A549 (cell line): ENCODE measurements at regions of chr5 and their contacts with region 1.

Region 1: DNA sequence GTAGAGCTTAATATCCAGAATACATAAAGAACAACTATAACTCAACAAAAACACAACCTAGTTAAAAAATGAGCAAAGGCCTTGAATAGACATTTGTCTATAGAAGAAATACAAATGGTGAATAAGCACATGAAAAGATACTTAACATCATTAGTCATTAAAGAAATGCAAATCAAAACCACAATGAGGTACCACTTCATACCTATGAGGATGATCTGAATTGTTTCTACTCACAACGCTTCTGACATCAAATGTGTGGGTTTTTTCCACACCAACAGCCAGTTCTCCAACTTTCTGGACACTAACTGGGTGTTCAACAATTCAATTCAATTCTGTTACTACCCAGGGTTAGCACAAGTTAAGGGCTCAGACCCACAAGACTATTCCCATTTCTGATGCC is 22.0 kb downstream of the SREK1IP1 start:
- DNase-seq: no peak
- ATAC-seq: no peak
- H3K4me3 ChIP-seq: no peak overlapping the region
- H3K27ac ChIP-seq: no peak overlapping the region
- H3K4me1 ChIP-seq: no peaks in the 10 kb centered on the region
- CTCF ChIP-seq: no peak
- EP300 ChIP-seq: no peak
- POLR2A ChIP-seq: no peak
- RAD21 ChIP-seq: no peak

Region 2: DNA sequence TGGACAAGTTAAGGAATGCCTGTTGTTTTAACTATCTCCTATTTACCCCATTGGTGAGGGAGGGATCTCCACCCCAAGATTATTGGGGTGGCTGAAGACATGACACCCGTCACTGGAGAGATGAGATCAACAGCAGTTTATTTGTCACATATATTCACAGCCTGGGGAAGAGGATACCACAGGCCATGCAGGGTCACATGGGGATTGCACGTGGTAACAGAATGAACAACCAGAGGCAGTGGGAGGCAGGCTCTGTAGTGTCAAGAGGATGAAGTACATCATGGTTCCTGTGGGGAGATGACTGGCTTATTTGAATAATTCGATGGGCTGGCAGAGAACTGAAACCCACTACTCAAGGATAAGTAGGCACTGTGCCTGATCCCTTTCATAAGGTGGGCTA is 74.8 kb before region 1 on chr5:
- CTCF ChIA-PET with region 1: no interaction called
- POLR2A ChIA-PET with region 1: no interaction called
- DNase-seq: no peak
- ATAC-seq: no peak
- H3K4me3 ChIP-seq: no peak overlapping the region
- H3K27ac ChIP-seq: no peak overlapping the region
- H3K4me1 ChIP-seq: no peaks in the 10 kb centered on the region
- CTCF ChIP-seq: no peak
- EP300 ChIP-seq: no peak
- POLR2A ChIP-seq: no peak
- RAD21 ChIP-seq: no peak

Region 3: DNA sequence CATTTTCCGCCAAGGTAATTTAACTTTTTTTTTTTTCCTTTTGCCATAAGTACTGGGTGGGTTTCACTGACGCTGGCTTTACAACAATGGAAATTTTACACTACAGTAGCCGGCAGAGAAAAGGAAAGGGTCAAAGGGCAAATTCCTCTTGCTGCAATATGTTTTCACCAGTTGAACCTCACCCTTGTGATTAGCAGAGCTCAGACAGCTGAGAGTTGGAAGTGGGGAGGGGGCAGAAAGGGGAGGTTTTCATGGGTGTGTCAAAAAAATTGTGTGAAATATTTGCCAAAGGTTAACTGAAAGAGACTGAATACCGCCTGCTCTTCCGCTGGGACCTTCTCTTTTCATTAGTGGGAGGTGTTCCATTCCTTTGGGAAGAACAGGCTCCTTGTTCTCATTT is 438.3 kb after region 1 on chr5:
- CTCF ChIA-PET with region 1: no interaction called
- POLR2A ChIA-PET with region 1: interaction called, 17 read pairs
- DNase-seq: no peak
- ATAC-seq: no peak
- H3K4me3 ChIP-seq: no peak overlapping the region
- H3K27ac ChIP-seq: no peak overlapping the region
- H3K4me1 ChIP-seq: no peaks in the 10 kb centered on the region
- CTCF ChIP-seq: no peak
- EP300 ChIP-seq: no peak
- POLR2A ChIP-seq: no peak
- RAD21 ChIP-seq: no peak